ENCODE measurements at regions of chr21 and their contacts with region 1.

Region 1: DNA sequence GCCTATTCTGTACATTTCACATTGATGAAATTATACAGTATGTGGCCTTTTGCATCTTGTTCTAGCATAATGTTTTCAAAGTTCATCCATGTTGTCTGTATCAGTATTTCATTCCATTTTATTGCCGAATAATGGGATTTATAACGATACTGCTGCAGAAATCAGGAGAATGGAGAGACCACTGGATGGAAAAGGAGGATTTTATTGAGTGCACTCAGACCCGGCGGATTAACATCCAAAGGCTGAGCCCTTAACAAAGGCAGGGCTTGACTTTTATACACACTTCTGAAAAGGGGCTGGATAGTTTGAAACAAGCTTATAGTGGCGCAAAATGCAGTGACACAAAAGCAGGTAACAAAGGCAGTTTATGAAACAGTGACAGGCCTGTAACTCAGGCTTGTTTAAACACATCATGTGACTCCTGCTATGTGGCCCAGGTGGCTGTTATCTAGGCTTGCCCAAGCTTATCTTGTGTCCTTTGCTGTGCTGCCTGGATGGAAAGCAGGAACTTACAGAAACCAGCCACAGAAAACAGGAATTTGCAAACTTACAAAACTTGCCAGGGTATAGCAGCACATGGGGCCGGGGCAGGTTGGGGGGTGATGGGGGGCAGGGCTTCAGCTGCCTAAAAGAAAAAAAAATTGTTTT is 32.8 kb upstream of the KCNJ15 start:
- DNase-seq: no peak
- H3K4me3 ChIP-seq: no peak overlapping the region
- H3K27ac ChIP-seq: no peak overlapping the region
- H3K4me1 ChIP-seq: no peaks in the 10 kb centered on the region
- H3K27me3 ChIP-seq: no peaks in the 10 kb centered on the region
- CTCF ChIP-seq: no peak
- POLR2A ChIP-seq: no peak

Region 2: DNA sequence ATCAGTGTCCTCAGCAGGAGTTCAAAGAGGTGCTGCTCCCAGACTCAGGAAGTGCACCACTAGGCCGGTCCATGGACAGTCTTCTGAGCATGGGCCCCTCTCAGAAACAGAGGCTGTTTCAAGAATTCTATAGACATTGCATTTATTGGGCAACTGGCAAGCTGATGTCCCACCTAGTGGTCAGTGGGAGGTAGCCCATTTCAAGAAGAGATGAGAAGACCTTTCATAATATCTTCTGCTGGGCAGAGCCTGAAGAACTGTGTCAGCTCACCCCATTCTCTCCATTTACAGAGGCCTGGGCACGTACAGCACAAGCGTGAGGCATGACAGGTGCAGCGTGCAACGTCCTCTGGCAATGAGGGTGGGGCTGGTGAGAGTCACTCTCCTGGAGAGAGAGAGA is 641.4 kb before region 1 on chr21:
- intact Hi-C with region 1: no loop called
- DNase-seq: no peak
- H3K4me3 ChIP-seq: no peak overlapping the region
- H3K27ac ChIP-seq: no peak overlapping the region
- H3K4me1 ChIP-seq: no peaks in the 10 kb centered on the region
- H3K27me3 ChIP-seq: no peaks in the 10 kb centered on the region
- CTCF ChIP-seq: peak in 2 of 3 donors; percentile 40 to 45
- POLR2A ChIP-seq: no peak

Region 3: GRCh38 chr21:38349111-38349746 is 125.2 kb after region 1 on chr21:
- intact Hi-C with region 1: loop called (anchors 10 kb)
- DNase-seq: no peak
- H3K4me3 ChIP-seq: no peak overlapping the region
- H3K27ac ChIP-seq: no peak overlapping the region
- H3K4me1 ChIP-seq: peaks cover 0 to 9% of the 10 kb centered on the region in 2 donors
- H3K27me3 ChIP-seq: no peaks in the 10 kb centered on the region
- CTCF ChIP-seq: no peak
- POLR2A ChIP-seq: no peak

Measured in breast epithelium (tissue), 4 donors.